ENCODE measurements at regions of chr11 and their contacts with region 1.

Region 1: GRCh38 chr11:79076526-79077115 is 364.2 kb downstream of the TENM4 start:
- DNase-seq: no peak
- CTCF ChIP-seq: peak; percentile 52

Region 2: DNA sequence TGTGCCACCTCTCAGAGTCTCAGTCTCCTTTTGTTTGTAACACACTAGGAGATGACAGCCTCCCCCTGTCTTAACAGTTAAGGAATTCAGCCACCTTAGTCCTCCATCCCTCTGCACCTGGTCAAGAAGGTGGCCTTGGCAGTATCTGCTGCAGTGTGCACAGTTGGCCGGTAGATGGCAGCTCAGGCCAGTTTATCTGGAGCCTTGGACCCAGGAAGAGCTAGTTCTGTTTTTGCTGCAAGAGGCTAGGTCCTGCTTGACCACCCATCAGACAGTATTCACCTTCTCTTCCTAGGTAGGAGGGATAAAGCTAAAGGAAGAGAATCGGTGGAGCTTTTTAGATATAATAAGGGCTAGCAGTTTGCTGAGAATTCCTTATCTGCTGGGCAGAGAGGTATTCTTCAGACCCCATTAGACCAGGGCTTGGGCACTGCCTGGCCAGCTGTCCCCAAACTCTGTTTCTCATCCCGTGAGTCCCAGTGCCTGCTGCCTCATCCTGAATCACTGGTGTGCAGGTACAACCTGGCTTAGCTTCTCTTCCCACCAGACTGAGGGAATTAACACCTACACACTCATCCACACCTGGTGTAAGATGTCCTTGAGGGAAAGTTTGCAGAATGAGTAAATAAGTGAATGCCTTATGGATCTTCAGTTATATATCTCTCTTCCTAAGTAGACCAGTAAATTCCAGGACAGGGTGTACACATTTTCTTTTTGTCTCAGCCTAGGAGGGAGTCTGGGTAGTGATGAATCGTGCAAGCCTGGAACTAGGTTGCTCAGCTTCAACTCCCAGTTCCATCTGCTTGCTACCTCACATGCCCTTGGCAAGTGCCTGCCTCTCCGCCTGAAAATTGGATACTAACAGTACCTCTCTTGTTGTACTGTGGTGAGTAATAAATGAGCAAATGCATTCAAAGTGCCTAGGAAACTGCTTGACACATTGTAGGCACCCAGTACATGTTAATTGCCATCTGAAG is 431.1 kb before region 1 on chr11:
- in situ Hi-C with region 1: loop called (anchors 25 kb)
- DNase-seq: peak; percentile 72
- CTCF ChIP-seq: peak; percentile 96